Motor neuron (in vitro differentiated cells): ENCODE measurements at regions of chr18 and their contacts with region 1.

Region 1: GRCh38 chr18:54647176-54647575 is 56.1 kb downstream of the DYNAP start:
- ATAC-seq: peak in 2 of 8 experiments; percentile 23 to 30
- H3K4me3 ChIP-seq: no peak overlapping the region
- H3K27ac ChIP-seq: no peak overlapping the region
- H3K4me1 ChIP-seq: no peaks in the 10 kb centered on the region

Region 2: DNA sequence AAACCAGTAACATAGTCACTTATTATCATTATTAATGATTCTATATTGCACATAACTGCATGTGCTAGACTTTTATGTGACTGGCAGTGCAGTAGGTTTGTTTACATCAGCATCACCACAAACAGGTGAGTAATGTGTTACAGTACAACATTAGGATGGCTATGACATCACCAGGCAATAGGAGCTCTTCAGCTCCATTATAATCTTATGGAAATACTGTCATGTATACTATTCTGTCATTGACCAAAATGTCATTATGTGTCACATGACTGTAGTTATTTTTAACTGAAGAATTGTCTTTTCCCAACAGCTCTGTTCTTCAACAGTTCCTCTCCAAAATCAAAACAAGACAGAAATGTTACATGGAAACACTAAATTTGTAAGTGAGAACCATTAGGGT is 193.2 kb before region 1 on chr18:
- in situ Hi-C with region 1: loop called in 3 of 9 experiments (anchors 10 to 25 kb)
- ATAC-seq: peak in 3 of 8 experiments; percentile 62 to 90 (median 89)
- H3K4me3 ChIP-seq: no peak overlapping the region
- H3K27ac ChIP-seq: no peak overlapping the region
- H3K4me1 ChIP-seq: no peaks in the 10 kb centered on the region

Region 3: GRCh38 chr18:54558609-54559585 is 88.3 kb before region 1 on chr18:
- in situ Hi-C with region 1: loop called in 2 of 9 experiments (anchors 10 to 25 kb)
- ATAC-seq: peak in 1 of 8 experiments; percentile 28
- H3K4me3 ChIP-seq: no peak overlapping the region
- H3K27ac ChIP-seq: no peak overlapping the region
- H3K4me1 ChIP-seq: peaks cover 0 to 3% of the 10 kb centered on the region in 2 donors